Left ventricle myocardium superior (tissue), 1 donor: ENCODE measurements at regions of chr22 and their contacts with region 1.

Region 1: GRCh38 chr22:32097018-32097417 is 54.0 kb downstream of the SLC5A1 start:
- DNase-seq: no peak
- ATAC-seq: peak; percentile 92

Region 2: GRCh38 chr22:31970490-31971444 is 126.3 kb before region 1 on chr22:
- intact Hi-C with region 1: loop called (anchors 10 kb)
- DNase-seq: peak; percentile 89
- ATAC-seq: peak; percentile 96